IMR-90 (cell line): ENCODE measurements at regions of chr5 and their contacts with region 1.

Region 1: DNA sequence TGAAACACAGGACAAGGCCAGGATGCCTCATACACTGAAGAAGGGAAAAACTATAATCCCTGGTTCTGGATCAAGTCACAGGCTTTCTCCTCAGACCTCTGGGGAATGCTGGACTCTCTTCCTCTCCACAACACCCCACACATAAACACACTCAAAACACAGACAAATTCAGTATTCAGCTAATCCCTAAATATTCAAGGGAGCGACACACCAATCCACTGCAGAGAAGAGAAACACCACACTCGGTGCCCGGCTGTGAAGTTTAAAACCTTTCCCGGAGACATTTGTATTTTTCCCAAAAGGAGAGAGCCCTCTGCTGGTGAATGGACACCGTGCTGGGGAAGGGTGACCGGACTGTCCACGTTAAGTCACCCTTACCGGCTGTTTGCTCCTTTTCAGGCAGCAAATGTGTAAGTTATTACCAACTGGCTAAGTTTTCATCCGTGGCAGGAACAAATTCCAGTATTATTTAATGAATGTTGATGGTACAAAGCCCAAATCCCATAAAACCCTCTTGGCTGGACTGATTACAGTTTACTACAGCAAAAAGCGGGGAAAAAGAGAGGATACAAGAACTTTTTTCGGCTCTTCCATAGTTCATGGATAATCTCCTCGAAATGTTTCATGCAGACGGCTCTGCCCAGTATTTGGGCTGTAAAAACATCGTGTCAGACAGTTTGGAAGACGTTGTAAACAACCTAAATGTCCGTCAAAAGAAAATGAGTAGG is 130.9 kb upstream of the SLC30A5 start:
- DNase-seq: peak; percentile 52
- ATAC-seq: peak; percentile 99
- H3K4me3 ChIP-seq: no peak overlapping the region
- H3K27ac ChIP-seq: no peak overlapping the region
- H3K4me1 ChIP-seq: no peaks in the 10 kb centered on the region
- H3K27me3 ChIP-seq: peaks cover 2% of the 10 kb centered on the region
- CTCF ChIP-seq: peak; percentile 71
- POLR2A ChIP-seq: no peak
- RAD21 ChIP-seq: peak; percentile 68

Region 2: DNA sequence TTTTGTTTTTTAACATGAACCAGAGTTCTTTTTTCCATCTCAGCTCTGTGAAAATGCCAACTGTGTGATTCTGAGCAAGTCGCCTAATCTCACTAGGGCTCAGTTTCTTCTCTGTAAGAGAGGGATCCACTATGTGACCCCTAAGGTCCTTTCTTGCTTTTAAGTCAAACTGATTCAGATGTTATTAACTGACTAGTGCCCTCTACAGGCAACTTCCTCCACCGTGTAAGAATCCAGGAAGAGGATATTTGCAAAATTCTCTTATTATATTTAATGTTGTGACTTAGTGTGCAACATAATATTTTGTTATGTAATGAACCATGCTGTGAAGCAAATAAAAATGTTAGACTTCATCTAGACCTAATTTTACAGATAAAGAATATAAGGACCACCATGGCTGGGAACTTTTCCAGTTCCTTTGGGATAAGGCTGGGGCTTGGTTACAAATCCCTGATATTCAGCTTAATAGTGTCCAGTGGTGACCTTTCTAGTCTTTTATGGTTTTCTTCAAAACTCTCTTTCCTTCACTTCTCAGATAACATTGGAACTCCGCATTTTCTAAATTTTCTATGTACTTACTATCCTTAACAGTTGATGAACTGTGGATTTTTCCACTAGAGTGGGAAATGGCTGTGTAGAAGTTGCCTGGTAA is 502.6 kb before region 1 on chr5:
- CTCF ChIA-PET with region 1: no interaction called
- POLR2A ChIA-PET with region 1: no interaction called
- dilution Hi-C with region 1: no loop called
- in situ Hi-C with region 1: no loop called
- intact Hi-C with region 1: loop called (anchors 5 kb)
- DNase-seq: peak; percentile 70
- ATAC-seq: peak; percentile 59
- H3K4me3 ChIP-seq: no peak overlapping the region
- H3K27ac ChIP-seq: no peak overlapping the region
- H3K4me1 ChIP-seq: peaks cover 2% of the 10 kb centered on the region
- H3K27me3 ChIP-seq: no peaks in the 10 kb centered on the region
- CTCF ChIP-seq: peak; percentile 67
- POLR2A ChIP-seq: no peak
- RAD21 ChIP-seq: peak; percentile 62